GM10248 (cell line): ENCODE measurements at regions of chr2 and their contacts with region 1.

Region 1: DNA sequence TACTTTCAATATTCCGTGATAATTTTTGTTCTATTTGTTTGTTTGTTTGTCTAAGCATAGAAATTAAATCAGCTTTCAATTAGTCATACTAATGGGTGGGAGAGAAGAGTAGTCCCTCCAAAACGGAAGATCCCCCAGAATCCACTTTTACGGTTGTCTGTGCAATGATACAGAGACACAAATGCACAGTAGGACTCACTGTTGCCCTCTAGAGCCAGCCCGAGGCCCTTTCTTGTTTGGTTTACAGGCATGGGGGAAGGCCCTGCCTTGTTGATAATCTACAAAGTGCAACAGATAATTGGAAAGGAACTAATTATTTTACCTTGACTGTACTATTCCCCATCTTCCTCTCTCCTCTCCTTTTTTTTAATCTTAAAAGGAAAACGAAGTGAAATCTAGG is 121.1 kb downstream of the ACOXL start:
- DNase-seq: peak; percentile 45
- CTCF ChIP-seq: peak; percentile 56

Region 2: GRCh38 chr2:110812726-110813645 is 40.5 kb before region 1 on chr2:
- CTCF ChIA-PET with region 1: interaction called, 30 read pairs
- POLR2A ChIA-PET with region 1: no interaction called
- DNase-seq: no peak
- CTCF ChIP-seq: no peak

Region 3: GRCh38 chr2:110837446-110838405 is 15.8 kb before region 1 on chr2:
- CTCF ChIA-PET with region 1: interaction called, 37 read pairs
- POLR2A ChIA-PET with region 1: no interaction called
- DNase-seq: no peak
- CTCF ChIP-seq: no peak

Region 4: DNA sequence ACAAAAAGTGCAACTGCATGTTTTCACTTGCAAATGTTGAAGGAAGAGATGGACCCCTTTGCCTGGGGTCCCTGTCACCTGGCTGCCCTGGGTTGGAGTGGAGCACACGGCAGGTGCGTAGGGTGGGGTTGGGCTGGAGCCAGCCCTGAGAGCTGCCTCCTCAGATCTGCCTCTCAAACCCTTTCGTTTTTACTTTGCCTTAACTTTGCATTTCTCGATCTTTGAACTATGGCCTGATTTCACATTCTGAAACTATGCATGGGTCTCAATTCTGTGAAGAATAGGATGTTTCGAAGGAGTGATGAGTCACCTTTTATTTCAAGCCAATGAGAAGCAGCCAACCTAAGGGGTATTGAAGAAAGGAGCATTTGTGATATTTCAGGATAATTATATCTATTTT is 11.7 kb after region 1 on chr2:
- CTCF ChIA-PET with region 1: interaction called, 35 read pairs
- POLR2A ChIA-PET with region 1: no interaction called
- DNase-seq: peak; percentile 77
- CTCF ChIP-seq: no peak

Region 5: DNA sequence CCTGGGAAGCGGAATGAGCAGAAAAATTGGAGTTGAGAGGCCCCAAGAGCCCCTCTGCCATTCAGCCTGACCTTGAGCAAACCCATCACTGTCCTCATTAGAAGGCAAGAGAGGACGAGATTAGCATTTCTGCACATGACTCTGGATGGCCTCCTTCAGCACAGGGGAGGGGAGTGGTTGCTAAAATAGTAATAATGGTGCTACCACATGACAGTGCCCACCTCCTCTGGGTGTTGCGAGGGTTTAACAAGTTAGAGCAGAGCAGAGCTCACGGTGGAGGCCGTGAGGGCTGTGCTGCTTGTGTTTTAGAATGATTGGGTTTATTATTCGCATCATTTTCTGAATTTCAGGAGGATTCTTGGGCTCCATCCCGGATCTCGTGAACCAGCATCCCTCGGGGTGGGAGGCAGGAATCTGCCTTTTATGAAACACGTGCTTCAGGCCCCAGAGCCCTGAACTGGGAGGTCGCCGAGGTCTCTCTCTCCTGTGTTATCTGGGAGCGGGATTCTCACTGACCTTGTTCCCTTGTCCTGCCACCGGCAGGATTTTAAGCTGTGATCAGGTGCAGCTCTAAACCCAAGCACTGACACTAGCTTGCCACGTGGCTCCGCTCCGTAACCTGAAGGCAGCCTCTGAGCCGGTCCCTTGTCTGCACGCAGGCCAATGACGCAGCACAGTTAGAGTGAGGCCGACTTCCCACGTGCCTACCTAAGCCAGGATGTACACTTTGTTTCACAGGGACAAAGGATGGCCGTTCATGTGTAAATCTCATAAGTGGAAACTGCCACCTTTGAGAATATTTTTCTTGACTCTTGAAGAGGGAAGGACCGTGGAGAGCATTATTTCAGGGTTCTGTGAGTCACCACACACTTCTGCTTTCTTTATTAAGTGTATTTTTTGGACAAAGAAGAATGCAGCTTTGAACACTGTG is 21.2 kb after region 1 on chr2:
- CTCF ChIA-PET with region 1: interaction called, 10 read pairs
- POLR2A ChIA-PET with region 1: no interaction called
- DNase-seq: peak; percentile 62
- CTCF ChIP-seq: peak; percentile 13

Region 6: GRCh38 chr2:110885256-110885655 is 31.7 kb after region 1 on chr2:
- CTCF ChIA-PET with region 1: no interaction called
- POLR2A ChIA-PET with region 1: no interaction called
- DNase-seq: no peak
- CTCF ChIP-seq: no peak

Region 7: GRCh38 chr2:110993557-110994231 is 140.2 kb after region 1 on chr2:
- CTCF ChIA-PET with region 1: no interaction called
- POLR2A ChIA-PET with region 1: no interaction called
- DNase-seq: no peak
- CTCF ChIP-seq: no peak